Heart left ventricle (tissue), 16 donors: ENCODE measurements at regions of chr7 and their contacts with region 1.

Region 1: DNA sequence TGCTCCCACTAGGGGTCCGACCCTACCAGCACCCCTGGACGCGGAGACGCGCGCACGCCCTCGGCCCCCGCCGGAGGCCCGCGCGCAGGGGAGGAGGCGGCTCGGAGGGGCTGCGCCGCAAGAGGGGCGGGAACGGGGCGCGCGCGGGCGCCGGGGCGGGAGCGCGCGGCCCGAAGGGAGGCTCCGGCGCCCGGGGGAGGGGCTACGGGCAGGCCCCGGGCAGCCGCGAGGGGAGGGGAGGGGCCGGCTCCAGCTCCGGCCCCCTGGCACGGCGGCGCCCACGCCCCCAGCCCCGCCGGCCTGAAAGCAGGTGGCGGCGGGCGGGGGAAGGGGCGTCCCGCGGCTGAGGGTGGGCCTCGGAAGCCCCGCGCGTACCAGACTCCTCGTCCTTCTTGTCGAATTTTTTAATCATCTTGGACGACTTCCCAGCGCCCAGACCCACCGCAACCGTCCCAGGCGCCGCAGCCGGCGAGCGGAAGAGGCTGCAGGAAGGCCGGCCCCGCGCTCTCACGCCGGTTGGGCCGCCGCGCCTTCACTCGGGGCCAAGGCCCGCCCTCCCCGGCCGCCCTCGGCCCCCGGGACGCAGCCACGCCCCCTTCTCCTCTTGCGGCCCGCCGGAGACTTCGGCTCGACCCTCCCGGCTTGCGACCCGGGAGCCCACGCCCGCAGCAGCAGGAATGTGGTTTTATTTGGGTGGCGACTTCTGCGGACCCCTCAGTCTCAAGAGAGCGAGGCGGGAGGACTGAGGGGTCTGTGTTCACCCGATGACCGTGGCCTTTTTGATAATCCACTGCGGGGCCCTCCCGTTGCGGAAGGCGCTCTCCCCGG is at the start of gene COPG2:
- DNase-seq: peak; percentile 87 to 93 (median 91)
- ATAC-seq: peak; percentile 98 to 100 (median 98)
- H3K4me3 ChIP-seq: peak within 1 kb of the TSS; percentile 56 to 93 (median 74)
- H3K27ac ChIP-seq: peak within 1 kb of the TSS; percentile 66 to 95 (median 87)
- H3K4me1 ChIP-seq: peaks cover 0 to 24% (median 8%) of the 10 kb centered on the region in 12 donors
- H3K27me3 ChIP-seq: no peaks in the 10 kb centered on the region
- CTCF ChIP-seq: peak in 1 of 12 donors; percentile 5
- POLR2A ChIP-seq: peak in 1 of 2 donors; percentile 67
- total RNA-seq, gene COPG2: 14.6 to 26.9 (median 19.5) TPM

Region 2: GRCh38 chr7:130430841-130431666 is 237.4 kb before region 1 on chr7:
- intact Hi-C with region 1: loop called in 1 of 10 experiments (anchors 5 kb)
- DNase-seq: peak in 3 of 5 donors; percentile 34 to 55 (median 35)
- ATAC-seq: peak in 3 of 4 donors; percentile 13 to 86 (median 71)
- H3K4me3 ChIP-seq: peak overlapping the region in 10 of 12 donors; percentile 7 to 42 (median 16)
- H3K27ac ChIP-seq: peak overlapping the region; percentile 11 to 61 (median 41)
- H3K4me1 ChIP-seq: peaks cover 0 to 42% (median 13%) of the 10 kb centered on the region in 12 donors
- H3K27me3 ChIP-seq: no peaks in the 10 kb centered on the region
- CTCF ChIP-seq: no peak
- POLR2A ChIP-seq: no peak

Region 3: DNA sequence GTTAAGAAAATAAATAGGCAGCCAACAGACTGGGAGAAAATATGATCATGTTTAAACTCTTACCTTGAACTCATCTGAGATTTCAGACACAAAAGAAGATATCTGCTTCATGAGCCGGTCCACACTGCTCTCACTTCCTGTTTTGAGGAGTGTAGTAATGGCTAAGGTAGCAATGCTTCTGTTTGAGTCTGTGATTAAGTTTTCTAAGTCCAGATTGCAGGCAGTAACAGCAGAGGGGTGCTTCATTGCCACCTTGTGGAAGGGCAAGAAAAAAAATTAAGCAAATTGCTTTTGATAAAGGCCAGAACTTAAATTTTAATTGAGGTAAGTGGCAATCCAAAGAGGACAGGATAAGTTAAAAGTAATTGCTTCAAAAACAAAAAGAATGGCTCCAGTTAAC is 107.5 kb before region 1 on chr7:
- intact Hi-C with region 1: loop called in 5 of 10 experiments (anchors 2 to 10 kb)
- DNase-seq: no peak
- ATAC-seq: no peak
- H3K4me3 ChIP-seq: no peak overlapping the region
- H3K27ac ChIP-seq: no peak overlapping the region
- H3K4me1 ChIP-seq: peaks cover 0 to 12% (median 3%) of the 10 kb centered on the region in 12 donors
- H3K27me3 ChIP-seq: no peaks in the 10 kb centered on the region
- CTCF ChIP-seq: no peak
- POLR2A ChIP-seq: no peak

Region 4: DNA sequence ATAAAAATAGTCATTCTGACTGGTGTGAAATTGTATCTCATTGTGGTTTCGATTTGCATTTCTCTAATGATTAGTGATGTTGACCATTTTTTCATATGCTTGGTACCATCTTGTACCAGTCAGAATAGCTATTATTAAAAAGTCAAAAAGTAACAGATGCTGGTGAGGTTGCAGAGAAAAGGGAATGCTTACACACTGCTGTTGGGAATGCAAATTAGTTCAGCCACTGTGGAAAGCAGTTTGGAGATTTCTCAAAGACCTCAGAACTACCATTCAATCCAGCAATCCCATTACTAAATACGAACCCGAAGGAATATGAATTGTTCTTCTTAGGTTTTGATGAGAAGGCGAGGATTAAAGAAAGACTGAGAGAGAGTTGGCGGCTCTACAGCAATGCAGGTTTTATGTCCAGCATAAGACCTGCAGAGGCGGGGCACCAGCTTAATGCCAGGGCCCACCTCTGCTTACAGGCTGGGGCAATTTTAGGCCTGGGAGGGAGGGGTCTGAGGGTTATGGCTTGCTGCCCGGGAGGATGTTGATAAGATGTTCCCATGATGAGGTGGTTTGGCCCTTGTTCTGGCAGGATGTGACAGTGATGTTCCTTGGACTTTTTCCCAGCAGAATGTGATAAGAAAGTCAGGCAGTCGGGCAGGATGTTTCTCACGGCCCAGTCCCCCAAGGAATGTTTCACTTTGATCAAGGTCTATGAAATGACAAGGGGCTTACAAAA is 102.1 kb before region 1 on chr7:
- intact Hi-C with region 1: loop called in 5 of 10 experiments (anchors 2 to 10 kb)
- DNase-seq: peak; percentile 81 to 93 (median 91)
- ATAC-seq: peak; percentile 99 to 100 (median 100)
- H3K4me3 ChIP-seq: peak overlapping the region in 1 of 12 donors; percentile 7
- H3K27ac ChIP-seq: peak overlapping the region; percentile 71 to 87 (median 82)
- H3K4me1 ChIP-seq: peaks cover 0 to 19% (median 4%) of the 10 kb centered on the region in 12 donors
- H3K27me3 ChIP-seq: no peaks in the 10 kb centered on the region
- CTCF ChIP-seq: no peak
- POLR2A ChIP-seq: no peak

Region 5: DNA sequence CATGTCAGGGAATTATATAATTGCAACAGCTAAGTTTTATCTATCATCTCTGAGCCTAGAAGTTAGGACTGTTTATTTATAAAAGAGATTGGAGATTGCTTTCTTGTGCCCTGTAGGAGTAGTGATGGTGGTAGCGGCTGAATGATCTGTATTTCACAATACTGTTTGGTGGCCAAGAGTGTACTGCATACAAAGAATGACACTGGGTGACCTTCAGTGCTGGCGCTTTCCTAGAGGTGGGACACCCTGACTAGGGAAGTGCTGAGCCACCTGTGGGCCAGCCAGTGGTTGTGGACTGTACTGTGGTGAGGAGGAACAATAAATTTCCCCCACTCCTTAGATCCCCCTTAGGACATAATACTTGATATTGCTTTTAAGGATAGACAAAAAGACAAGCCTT is 52.9 kb before region 1 on chr7:
- intact Hi-C with region 1: no loop called
- DNase-seq: peak in 2 of 5 donors; percentile 30 to 42
- ATAC-seq: peak; percentile 79 to 95 (median 86)
- H3K4me3 ChIP-seq: no peak overlapping the region
- H3K27ac ChIP-seq: no peak overlapping the region
- H3K4me1 ChIP-seq: no peaks in the 10 kb centered on the region
- H3K27me3 ChIP-seq: no peaks in the 10 kb centered on the region
- CTCF ChIP-seq: no peak
- POLR2A ChIP-seq: no peak

Region 6: GRCh38 chr7:131124001-131124629 is 455.6 kb after region 1 on chr7:
- intact Hi-C with region 1: no loop called
- DNase-seq: no peak
- ATAC-seq: no peak
- H3K4me3 ChIP-seq: no peak overlapping the region
- H3K27ac ChIP-seq: no peak overlapping the region
- H3K4me1 ChIP-seq: no peaks in the 10 kb centered on the region
- H3K27me3 ChIP-seq: no peaks in the 10 kb centered on the region
- CTCF ChIP-seq: no peak
- POLR2A ChIP-seq: no peak